ENCODE measurements at regions of chr2 and their contacts with region 1.

Region 1: DNA sequence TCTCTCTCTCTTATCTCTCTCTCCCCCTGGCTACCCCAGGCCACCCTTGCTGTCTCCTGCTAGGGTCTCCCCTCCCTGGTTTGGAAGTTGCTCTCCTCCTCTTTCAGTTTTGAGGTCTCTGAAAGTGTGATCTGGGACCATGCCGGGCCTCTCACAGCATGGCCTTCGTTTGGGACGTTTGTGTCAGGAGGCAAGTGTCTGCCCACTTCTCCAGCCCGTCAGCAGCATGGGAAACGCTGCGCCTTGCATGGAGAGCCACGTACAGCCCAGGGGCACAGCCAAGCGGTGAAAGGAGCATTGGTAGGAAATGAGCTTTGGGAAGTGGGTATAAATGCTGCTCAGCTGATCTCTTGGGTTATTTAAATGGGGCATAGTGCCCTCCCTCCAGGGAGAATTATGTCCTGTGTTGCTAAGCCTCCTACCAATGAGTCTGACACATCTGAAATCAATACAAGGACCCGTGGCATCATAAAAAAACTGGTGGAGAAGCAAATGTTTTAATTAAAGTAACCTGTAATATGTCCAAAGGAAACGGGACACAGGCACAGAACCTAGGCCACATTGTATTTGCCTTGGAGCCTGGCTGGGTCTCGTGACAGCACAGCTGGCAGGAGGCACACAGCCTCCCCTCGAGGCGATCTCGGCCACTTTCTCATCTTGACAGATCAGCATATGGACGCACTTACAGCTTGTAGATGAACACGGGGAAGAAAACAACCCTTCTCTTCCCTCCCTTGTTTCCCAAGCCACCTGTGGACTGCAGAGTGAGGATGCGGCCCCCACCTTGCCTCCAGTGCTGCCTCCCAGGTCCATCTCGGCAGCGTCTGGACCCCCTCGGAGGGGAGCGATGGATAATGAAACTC is 72.7 kb downstream of the SH3RF3 start:
- DNase-seq: peak in 1 of 2 donors; percentile 70
- ATAC-seq: peak; percentile 59
- H3K4me3 ChIP-seq: no peak overlapping the region
- H3K27ac ChIP-seq: peak overlapping the region; percentile 31 to 62
- H3K4me1 ChIP-seq: no peaks in the 10 kb centered on the region
- H3K27me3 ChIP-seq: no peaks in the 10 kb centered on the region

Region 2: DNA sequence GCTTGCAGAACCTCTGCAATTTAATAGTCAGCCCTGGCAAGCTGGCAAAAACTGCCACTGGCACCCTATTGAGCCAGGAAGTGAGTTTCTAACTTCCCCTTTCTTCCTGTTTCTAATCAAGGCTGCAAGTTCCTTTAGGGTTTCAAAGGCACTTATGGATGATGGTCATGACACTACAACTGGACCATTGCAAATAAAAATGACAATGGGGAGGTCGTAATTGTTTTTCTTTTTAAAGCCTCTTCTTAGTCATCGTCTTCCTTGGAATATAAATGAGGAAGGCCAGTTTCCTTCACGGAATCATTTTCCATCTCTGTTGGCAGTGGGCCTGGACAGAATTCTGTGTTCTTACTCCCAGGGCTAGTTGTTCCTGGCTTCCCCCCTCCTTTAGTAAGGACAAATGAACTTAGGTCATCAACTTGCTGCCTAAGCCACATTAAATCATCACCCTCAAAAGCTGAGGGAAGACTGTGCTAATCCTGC is 36.9 kb before region 1 on chr2:
- intact Hi-C with region 1: loop called in 1 of 2 experiments (anchors 2 kb)
- DNase-seq: peak; percentile 71 to 73
- ATAC-seq: peak; percentile 49
- H3K4me3 ChIP-seq: no peak overlapping the region
- H3K27ac ChIP-seq: peak overlapping the region; percentile 22 to 76
- H3K4me1 ChIP-seq: peaks cover 8 to 9% of the 10 kb centered on the region in 2 donors
- H3K27me3 ChIP-seq: no peaks in the 10 kb centered on the region

Region 3: DNA sequence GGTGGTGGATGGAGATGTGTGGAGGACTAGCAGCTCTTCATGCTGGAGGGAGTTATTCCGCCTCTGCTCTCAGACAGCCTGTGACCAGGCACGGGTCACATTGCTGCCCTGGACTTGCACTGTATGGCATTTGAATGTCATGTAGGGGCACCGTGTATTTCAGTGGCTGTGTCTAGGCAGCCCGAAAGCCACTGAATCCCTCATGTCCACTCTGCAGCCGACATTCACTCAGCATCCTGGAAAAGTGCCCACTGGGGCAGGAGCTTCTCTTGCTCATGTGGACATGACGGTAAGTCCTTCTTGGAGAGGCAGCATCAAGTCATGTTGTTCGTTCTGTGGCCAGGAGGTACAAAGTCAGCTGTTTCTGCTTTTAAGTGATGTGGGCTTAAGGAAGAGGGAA is 55.2 kb after region 1 on chr2:
- intact Hi-C with region 1: loop called in 1 of 2 experiments (anchors 5 kb)
- DNase-seq: peak in 1 of 2 donors; percentile 68
- ATAC-seq: no peak
- H3K4me3 ChIP-seq: no peak overlapping the region
- H3K27ac ChIP-seq: no peak overlapping the region
- H3K4me1 ChIP-seq: peaks cover 3 to 5% of the 10 kb centered on the region in 2 donors
- H3K27me3 ChIP-seq: no peaks in the 10 kb centered on the region

Measured in aorta (tissue), 5 donors.